Activated CD4-positive, alpha-beta T cell treated with anti-CD3 and anti-CD28 coated beads for 36 hours (primary cell): ENCODE measurements at regions of chr2 and their contacts with region 1.

Region 1: DNA sequence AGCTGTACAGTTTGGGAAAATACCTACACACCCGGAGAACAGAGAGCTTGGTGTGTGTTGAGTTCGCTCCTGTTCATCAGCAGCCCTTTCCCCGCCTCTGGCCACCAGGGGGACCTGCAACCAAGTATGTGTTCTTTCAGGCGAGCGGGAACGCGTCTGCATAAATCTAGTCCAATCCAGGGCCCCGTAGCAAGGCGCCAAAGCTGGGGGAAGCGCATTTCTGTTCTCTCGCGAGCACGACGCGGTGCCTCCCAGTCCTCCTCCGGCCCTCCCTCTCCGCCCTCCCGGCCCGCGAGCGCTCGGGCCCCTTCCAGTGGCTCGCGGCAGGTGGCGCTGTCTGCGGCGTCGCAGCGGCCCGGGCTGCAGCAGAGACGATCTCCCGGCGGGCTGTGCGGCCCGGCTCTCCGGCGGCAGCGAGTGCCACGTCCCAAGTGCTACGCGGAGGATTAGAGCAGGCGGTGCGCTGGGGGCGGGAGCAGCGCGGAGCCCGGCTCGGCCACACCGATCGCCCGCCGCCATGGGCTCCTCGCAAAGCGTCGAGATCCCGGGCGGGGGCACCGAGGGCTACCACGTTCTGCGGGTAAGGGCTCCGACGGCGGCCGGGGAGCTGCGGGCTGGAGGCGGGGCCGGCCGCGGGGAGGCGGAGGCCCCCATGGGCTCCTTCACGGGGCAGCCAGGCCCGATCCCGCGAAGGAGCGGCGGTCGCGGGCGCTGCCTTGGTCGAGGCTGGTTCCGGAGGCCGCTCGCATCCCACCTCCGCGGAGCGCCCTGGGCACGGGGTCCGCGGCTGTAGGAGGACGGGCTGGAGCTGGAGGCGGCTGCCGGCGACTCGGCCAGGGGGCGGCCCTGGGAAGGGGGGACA is at the start of gene GORASP2:
- DNase-seq: peak; percentile 99
- ATAC-seq: peak; percentile 94
- H3K4me3 Mint-ChIP-seq: peak within 1 kb of the TSS; percentile 96
- H3K27ac Mint-ChIP-seq: peak within 1 kb of the TSS; percentile 96
- H3K4me1 Mint-ChIP-seq: peaks cover 36% of the 10 kb centered on the region
- H3K27me3 Mint-ChIP-seq: no peaks in the 10 kb centered on the region
- total RNA-seq, gene GORASP2: 66.5 to 69.8 TPM

Region 2: GRCh38 chr2:170361090-170361936 is 567.7 kb before region 1 on chr2:
- CTCF ChIA-PET with region 1: interaction called, 4 read pairs
- POLR2A ChIA-PET with region 1: no interaction called
- intact Hi-C with region 1: loop called in 1 of 2 experiments (anchors 2 kb)
- DNase-seq: peak; percentile 76
- ATAC-seq: peak; percentile 58
- H3K4me3 Mint-ChIP-seq: no peak overlapping the region
- H3K27ac Mint-ChIP-seq: peak overlapping the region; percentile 90
- H3K4me1 Mint-ChIP-seq: peaks cover 29% of the 10 kb centered on the region
- H3K27me3 Mint-ChIP-seq: peaks cover 7% of the 10 kb centered on the region

Region 3: GRCh38 chr2:170973492-170974303 is 44.6 kb after region 1 on chr2:
- CTCF ChIA-PET with region 1: interaction called, 8 read pairs
- POLR2A ChIA-PET with region 1: interaction called, 6 read pairs
- intact Hi-C with region 1: loop called (anchors 1 to 2 kb)
- DNase-seq: peak; percentile 93
- ATAC-seq: peak; percentile 93
- H3K4me3 Mint-ChIP-seq: peak overlapping the region; percentile 67
- H3K27ac Mint-ChIP-seq: peak overlapping the region; percentile 80
- H3K4me1 Mint-ChIP-seq: peaks cover 10% of the 10 kb centered on the region
- H3K27me3 Mint-ChIP-seq: no peaks in the 10 kb centered on the region

Region 4: DNA sequence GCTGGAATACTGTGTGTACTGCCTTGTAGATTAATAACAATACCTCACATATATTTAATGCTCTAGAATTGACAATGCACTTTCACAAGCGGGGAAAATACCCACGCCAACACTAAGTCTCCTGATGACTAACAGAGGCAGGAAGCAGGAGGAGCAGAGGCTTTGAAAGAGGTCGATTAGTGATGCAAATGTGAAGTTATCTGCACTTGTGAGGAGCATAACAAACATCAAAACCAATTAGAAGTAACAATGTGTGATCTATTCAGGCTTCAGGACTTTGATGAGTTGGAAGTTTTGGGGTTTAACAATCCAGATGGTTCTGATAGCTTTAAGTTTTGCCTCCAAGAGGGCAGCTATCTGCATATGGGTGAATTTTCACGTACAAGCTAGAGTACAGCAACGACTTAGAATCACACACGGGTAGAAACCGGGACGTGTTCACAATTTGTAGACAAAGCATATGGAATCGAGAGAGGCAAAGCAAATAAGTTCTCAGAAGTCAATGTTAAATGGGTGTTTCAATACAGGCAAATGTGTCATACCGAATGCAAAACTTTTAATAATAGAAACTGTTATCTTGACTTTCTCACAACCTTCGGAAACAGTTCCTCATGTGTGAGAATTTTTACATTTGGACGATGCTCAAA is 390.2 kb after region 1 on chr2:
- CTCF ChIA-PET with region 1: no interaction called
- POLR2A ChIA-PET with region 1: no interaction called
- intact Hi-C with region 1: loop called (anchors 1 to 2 kb)
- DNase-seq: peak; percentile 78
- ATAC-seq: peak; percentile 80
- H3K4me3 Mint-ChIP-seq: peak overlapping the region; percentile 59
- H3K27ac Mint-ChIP-seq: peak overlapping the region; percentile 98
- H3K4me1 Mint-ChIP-seq: peaks cover 67% of the 10 kb centered on the region
- H3K27me3 Mint-ChIP-seq: no peaks in the 10 kb centered on the region

Region 5: DNA sequence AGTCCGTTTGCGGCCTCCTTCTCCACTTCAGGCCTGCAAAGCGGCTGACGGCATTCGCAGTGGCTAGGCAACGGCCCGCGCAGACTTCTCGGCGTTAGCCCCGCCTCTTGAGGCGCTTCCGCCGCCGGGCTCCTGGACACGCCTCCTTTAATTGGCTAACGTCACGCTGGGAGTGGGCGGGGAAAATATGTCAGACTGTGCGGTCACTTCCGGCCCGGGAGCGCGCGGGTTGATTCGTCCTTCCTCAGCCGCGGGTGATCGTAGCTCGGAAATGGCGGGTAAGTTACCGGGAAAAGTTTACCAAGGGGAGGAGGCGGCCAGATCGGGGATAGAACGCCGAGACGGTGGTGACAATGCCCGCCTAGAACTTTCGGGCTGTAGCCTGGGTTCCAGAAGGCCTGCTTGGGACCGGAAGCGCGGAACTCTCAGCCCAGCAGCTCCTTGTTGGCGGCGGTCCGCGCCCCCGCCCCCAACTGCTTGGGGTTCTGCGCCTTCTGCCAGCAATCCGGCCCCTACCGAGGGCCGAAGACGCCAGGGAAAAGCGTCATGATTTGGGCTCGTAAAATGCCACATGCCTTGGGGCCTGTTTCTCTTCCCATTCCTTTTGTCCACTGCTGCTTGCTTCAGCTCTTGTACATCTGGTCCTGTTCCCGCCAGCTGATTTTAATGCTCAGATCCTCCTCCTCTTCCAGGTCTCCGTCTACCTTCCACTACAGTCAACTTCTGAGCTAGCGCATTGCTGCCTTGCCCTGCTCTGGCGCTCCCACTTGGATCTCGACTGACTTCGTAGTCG is 993.4 kb after region 1 on chr2 and contains the start of gene HAT1:
- CTCF ChIA-PET with region 1: no interaction called
- POLR2A ChIA-PET with region 1: no interaction called
- intact Hi-C with region 1: loop called in 1 of 2 experiments (anchors 1 kb)
- DNase-seq: peak; percentile 99
- ATAC-seq: peak; percentile 96
- H3K4me3 Mint-ChIP-seq: peak within 1 kb of the TSS; percentile 94
- H3K27ac Mint-ChIP-seq: peak within 1 kb of the TSS; percentile 98
- H3K4me1 Mint-ChIP-seq: peaks cover 38% of the 10 kb centered on the region
- H3K27me3 Mint-ChIP-seq: no peaks in the 10 kb centered on the region
- total RNA-seq, gene HAT1: 88.5 to 92.6 TPM

Region 6: DNA sequence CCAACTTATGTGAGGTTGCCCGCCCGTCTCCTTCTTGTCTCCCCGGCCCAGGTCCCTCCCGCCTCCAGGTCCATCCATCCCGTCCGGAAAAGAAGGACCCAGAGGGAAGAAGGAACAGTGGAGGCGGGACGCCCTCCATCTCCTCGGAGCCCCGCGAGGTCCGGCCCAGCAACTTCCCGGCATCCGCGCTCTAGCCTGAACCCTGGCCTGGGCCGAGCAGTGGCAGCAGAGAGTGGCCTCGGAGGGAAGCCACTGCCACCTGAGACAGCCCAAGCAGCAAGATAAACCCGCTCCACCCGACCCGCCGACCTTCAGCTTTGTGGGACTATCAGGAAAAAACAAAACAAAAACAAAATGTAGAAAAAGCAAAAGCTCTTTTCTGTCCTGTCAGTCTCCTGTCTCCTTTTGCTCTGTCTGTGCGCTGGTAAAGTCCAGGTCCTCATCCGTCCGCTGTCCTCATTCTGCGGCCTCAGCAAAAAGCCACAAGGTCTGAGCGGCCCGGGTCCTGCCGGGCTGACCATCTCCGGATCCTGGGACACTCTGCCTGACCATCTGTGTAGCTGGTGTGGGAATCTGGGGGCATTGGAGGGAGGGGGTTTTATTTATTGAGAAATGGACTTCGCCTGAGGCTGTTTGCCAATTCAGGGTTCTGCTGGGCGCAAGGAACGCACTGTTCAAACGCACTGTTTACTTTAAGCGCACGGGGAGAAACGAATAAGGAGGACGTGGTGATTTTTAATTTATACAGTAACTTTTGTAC is 1159.4 kb after region 1 on chr2:
- CTCF ChIA-PET with region 1: no interaction called
- POLR2A ChIA-PET with region 1: no interaction called
- intact Hi-C with region 1: no loop called
- DNase-seq: no peak
- ATAC-seq: no peak
- H3K4me3 Mint-ChIP-seq: no peak overlapping the region
- H3K27ac Mint-ChIP-seq: no peak overlapping the region
- H3K4me1 Mint-ChIP-seq: peaks cover 53% of the 10 kb centered on the region
- H3K27me3 Mint-ChIP-seq: peaks cover 84% of the 10 kb centered on the region

Region 7: GRCh38 chr2:172555522-172556283 is 1626.6 kb after region 1 on chr2 and contains the start of gene PDK1:
- CTCF ChIA-PET with region 1: no interaction called
- POLR2A ChIA-PET with region 1: no interaction called
- intact Hi-C with region 1: loop called in 1 of 2 experiments (anchors 1 kb)
- DNase-seq: peak; percentile 96
- ATAC-seq: peak; percentile 89
- H3K4me3 Mint-ChIP-seq: peak within 1 kb of the TSS; percentile 88
- H3K27ac Mint-ChIP-seq: peak within 1 kb of the TSS; percentile 95
- H3K4me1 Mint-ChIP-seq: peaks cover 57% of the 10 kb centered on the region
- H3K27me3 Mint-ChIP-seq: peaks cover 6% of the 10 kb centered on the region
- total RNA-seq, gene PDK1: 56.8 to 85.5 TPM